ENCODE measurements at regions of chr10 and their contacts with region 1.

Region 1: GRCh38 chr10:26697163-26697921 is at the start of gene PDSS1:
- DNase-seq: peak; percentile 81
- H3K4me3 ChIP-seq: peak within 1 kb of the TSS; percentile 86 to 97 (median 94)
- H3K27ac ChIP-seq: peak within 1 kb of the TSS; percentile 90 to 97 (median 96)
- H3K4me1 ChIP-seq: peaks cover 4 to 46% (median 35%) of the 10 kb centered on the region in 4 donors
- H3K27me3 ChIP-seq: no peaks in the 10 kb centered on the region
- CTCF ChIP-seq: no peak
- EP300 ChIP-seq: no peak
- POLR2A ChIP-seq: peak; percentile 74
- total RNA-seq, gene PDSS1: 13.1 to 66.7 (median 23.8) TPM

Region 2: GRCh38 chr10:26334932-26335573 is 362.3 kb before region 1 on chr10:
- in situ Hi-C with region 1: loop called in 1 of 4 experiments (anchors 25 kb)
- intact Hi-C with region 1: no loop called
- DNase-seq: peak; percentile 44
- H3K4me3 ChIP-seq: peak overlapping the region in 1 of 4 donors; percentile 13
- H3K27ac ChIP-seq: no peak overlapping the region
- H3K4me1 ChIP-seq: no peaks in the 10 kb centered on the region
- H3K27me3 ChIP-seq: no peaks in the 10 kb centered on the region
- CTCF ChIP-seq: peak; percentile 64 to 80 (median 66)
- EP300 ChIP-seq: no peak
- POLR2A ChIP-seq: no peak

Measured in transverse colon (tissue), 4 donors.